CD14-positive monocyte (primary cell): ENCODE measurements at regions of chr9 and their contacts with region 1.

Region 1: DNA sequence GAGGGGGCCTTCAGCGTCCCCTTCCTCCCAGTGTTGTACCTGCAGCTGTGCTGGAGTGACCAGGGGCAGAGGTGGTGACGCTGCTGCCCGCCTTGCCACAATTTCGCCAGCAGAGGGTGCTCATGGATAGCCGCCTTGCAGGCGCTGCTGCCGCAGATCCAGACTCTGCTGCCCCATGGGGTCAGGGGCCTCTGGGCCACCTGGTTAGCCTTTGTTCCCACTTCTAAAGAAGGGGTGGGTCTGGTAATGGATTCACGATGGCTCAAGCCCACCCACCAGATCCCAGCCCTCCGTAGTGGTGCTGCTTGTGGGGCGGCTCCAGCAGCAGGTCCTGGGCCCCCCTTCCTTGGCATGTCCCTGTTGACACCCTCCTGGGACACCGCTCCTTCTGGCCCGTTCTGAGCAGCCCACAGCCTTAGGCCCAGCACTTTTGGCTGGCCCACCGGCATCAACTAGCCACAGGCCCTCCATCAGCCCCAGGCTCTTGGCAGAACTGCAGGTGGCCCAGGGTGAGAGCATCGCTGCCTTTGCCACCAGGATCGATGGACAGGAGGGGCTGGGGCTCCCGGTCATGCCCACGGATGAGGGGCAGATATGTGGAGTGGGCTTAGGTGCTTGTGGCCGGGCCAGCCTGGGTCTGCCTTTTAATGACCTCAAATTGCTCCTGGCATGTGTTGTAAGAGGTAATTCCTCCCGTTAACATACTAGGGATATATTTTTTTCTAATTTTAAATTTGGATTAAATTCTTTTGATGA is 57.2 kb downstream of the COL5A1 start:
- DNase-seq: peak; percentile 26 to 57 (median 49)
- H3K4me3 ChIP-seq: no peak overlapping the region
- H3K4me3 Mint-ChIP-seq: no peak overlapping the region
- H3K27ac ChIP-seq: no peak overlapping the region
- H3K27ac Mint-ChIP-seq: no peak overlapping the region
- H3K4me1 ChIP-seq: no peaks in the 10 kb centered on the region
- H3K4me1 Mint-ChIP-seq: no peaks in the 10 kb centered on the region
- H3K27me3 ChIP-seq: no peaks in the 10 kb centered on the region
- H3K27me3 Mint-ChIP-seq: peaks cover 2 to 15% (median 7%) of the 10 kb centered on the region in 3 donors
- CTCF ChIP-seq: peak; percentile 91

Region 2: DNA sequence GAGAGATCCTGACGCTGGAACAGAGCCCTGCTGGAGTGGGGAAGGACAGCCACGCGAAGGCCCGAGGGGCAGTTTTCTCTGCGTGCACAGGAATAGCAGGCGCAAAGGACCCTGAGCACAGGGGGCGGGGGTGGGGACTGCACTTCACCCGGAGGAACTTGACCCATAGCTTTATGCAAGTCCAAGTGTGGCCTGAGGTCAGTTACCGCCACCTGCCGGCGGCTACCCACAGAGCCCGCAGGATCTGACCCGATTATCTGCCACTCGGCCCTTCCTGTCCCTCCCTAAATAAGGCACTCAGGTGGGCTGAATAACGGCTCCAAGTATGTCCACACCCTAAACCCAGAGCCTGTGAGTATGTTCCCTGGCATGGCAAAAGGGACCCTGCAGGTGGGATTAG is 284.3 kb after region 1 on chr9:
- intact Hi-C with region 1: loop called (anchors 2 to 5 kb)
- DNase-seq: peak; percentile 40 to 60 (median 49)
- H3K4me3 ChIP-seq: no peak overlapping the region
- H3K4me3 Mint-ChIP-seq: peak overlapping the region in 1 of 2 donors; percentile 39
- H3K27ac ChIP-seq: peak overlapping the region in 1 of 2 donors; percentile 33
- H3K27ac Mint-ChIP-seq: peak overlapping the region in 3 of 7 donors; percentile 34 to 74 (median 61)
- H3K4me1 ChIP-seq: peaks cover 23 to 29% of the 10 kb centered on the region in 2 donors
- H3K4me1 Mint-ChIP-seq: peaks cover 36% of the 10 kb centered on the region
- H3K27me3 ChIP-seq: peaks cover 0 to 5% of the 10 kb centered on the region in 2 donors
- H3K27me3 Mint-ChIP-seq: peaks cover 6 to 26% (median 23%) of the 10 kb centered on the region in 3 donors
- CTCF ChIP-seq: peak; percentile 79

Region 3: DNA sequence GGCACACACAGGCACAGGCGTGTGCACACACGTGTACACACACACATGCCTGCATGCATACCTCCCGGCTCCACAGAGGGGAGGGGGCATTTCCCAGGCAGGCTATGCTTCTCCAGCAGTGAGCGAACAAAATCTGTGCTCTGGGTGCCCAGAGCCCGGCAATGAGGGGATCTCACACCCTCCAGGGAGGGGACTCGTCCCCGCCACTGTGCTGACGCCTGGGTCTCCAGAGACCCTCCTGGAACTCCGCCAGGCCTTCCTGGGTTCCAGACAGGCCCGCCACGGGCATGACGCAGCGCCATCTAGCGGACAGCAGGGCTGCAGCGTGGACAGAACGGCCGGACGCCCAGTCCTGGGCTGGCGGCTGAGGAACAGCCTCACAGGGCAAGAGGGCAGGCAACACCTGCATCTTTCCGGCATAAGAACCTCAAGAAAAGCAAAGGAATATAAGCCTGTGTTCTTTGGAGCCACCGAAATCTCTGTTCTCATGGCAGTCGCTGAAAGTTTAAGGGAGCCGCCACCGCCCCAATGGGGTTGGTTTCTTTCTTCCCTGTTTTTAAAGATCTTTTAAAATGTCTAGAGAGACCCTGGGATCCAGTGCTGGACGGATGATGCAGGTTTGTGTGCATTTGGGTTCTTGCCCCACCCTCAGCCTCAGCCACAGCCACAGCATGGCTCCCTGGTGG is 645.2 kb after region 1 on chr9:
- intact Hi-C with region 1: loop called (anchors 2 to 5 kb)
- DNase-seq: peak; percentile 10 to 35 (median 14)
- H3K4me3 ChIP-seq: no peak overlapping the region
- H3K4me3 Mint-ChIP-seq: no peak overlapping the region
- H3K27ac ChIP-seq: no peak overlapping the region
- H3K27ac Mint-ChIP-seq: no peak overlapping the region
- H3K4me1 ChIP-seq: no peaks in the 10 kb centered on the region
- H3K4me1 Mint-ChIP-seq: no peaks in the 10 kb centered on the region
- H3K27me3 ChIP-seq: peaks cover 0 to 12% of the 10 kb centered on the region in 2 donors
- H3K27me3 Mint-ChIP-seq: peaks cover 7 to 25% (median 23%) of the 10 kb centered on the region in 3 donors
- CTCF ChIP-seq: peak; percentile 95

Region 4: DNA sequence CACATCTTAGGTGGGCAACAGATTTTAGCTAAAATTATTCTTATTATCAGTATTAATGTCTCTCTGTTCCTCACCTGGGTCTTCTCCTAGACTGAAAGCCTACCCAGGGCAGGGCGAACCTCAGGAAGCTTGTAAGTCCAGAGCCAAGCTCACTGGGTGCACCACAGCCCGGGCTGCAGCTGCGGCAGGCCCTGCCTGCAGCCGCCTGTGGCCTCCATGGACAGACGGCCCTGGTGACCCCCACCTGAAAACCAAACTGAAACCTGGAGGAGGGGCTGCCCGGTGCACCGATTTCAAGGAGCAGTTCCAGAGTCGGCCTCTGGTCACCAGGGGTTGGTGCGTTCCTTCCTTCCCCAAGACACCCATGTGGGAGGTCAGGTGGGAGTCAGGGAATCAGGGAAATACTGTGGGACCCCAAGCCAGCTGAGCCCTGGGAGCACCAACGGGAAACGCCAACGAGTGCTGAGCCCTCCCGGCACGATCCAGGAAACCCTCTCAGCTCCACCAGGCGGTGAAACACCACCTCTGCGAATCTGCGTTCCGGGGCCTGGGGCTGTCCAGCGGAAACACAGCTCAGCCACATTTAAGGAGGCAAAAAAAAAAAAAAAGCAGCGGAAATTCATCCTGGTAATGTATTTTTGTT is 712.2 kb after region 1 on chr9:
- intact Hi-C with region 1: loop called (anchors 5 kb)
- DNase-seq: no peak
- H3K4me3 ChIP-seq: no peak overlapping the region
- H3K4me3 Mint-ChIP-seq: no peak overlapping the region
- H3K27ac ChIP-seq: no peak overlapping the region
- H3K27ac Mint-ChIP-seq: no peak overlapping the region
- H3K4me1 ChIP-seq: peaks cover 0 to 5% of the 10 kb centered on the region in 2 donors
- H3K4me1 Mint-ChIP-seq: no peaks in the 10 kb centered on the region
- H3K27me3 ChIP-seq: no peaks in the 10 kb centered on the region
- H3K27me3 Mint-ChIP-seq: peaks cover 5 to 59% (median 13%) of the 10 kb centered on the region in 3 donors
- CTCF ChIP-seq: no peak